Dorsolateral prefrontal cortex (tissue), 120 donors: ENCODE measurements at regions of chr2 and their contacts with region 1.

Region 1: GRCh38 chr2:210252699-210253606 is 27.7 kb upstream of the ACADL start:
- DNase-seq: no peak
- H3K4me3 ChIP-seq: no peak overlapping the region
- H3K27ac ChIP-seq: no peak overlapping the region
- H3K27me3 ChIP-seq: no peaks in the 10 kb centered on the region
- CTCF ChIP-seq: no peak

Region 2: DNA sequence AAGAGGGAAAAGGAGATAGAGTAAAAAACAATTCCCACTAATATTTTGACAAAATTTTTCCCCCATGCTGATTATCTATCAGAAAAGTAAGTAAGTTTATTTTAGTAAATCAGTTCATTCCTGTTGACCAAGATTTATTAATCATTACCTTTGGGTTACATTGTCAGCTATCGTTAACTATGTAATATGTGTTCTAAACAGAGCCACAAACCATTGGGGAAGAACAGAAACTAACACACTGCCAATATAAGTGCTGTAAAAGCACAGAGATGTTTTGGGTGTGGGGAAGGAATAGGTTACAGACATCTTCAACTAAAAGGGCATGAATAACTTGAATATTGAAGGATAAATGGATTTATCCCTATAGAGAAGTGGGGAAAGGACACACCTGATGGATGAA is 14.7 kb after region 1 on chr2:
- intact Hi-C with region 1: no loop called
- DNase-seq: no peak
- H3K4me3 ChIP-seq: no peak overlapping the region
- H3K27ac ChIP-seq: no peak overlapping the region
- H3K27me3 ChIP-seq: peaks cover 0 to 19% (median 0%) of the 10 kb centered on the region in 45 donors
- CTCF ChIP-seq: no peak

Region 3: GRCh38 chr2:210392469-210392951 is 139.6 kb after region 1 on chr2:
- intact Hi-C with region 1: loop called (anchors 5 to 10 kb)
- DNase-seq: no peak
- H3K4me3 ChIP-seq: no peak overlapping the region
- H3K27ac ChIP-seq: no peak overlapping the region
- H3K27me3 ChIP-seq: no peaks in the 10 kb centered on the region
- CTCF ChIP-seq: no peak

Region 4: DNA sequence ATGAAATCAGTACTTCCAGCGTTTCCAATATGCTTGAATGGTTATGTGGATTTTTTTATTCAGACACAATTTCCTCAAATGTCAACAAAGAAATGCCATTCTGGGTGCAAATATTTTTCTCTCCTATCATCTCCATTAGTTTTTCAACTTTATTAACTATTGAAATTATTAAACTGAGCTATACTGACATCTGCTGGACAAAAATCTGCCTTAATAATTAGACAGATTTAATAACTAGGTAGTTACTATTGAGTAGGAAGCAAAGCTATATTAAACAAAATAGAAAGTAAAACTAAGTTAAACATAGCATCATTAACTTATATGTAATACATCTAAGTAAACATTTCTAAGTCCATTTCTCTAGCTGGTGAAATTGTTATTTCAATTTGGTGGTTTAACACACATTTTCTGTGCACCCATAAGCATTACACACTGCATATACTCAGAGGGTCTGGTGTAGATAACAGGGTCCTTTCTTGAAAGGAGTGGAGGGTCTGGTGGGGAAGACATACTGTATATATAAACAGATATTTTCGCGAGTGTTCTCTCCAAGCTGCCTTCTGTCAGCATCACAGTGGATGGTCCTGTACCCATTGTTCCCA is 146.6 kb after region 1 on chr2:
- intact Hi-C with region 1: loop called (anchors 5 to 10 kb)
- DNase-seq: no peak
- H3K4me3 ChIP-seq: no peak overlapping the region
- H3K27ac ChIP-seq: no peak overlapping the region
- H3K27me3 ChIP-seq: no peaks in the 10 kb centered on the region
- CTCF ChIP-seq: peak; percentile 27 to 72 (median 54)

Region 5: DNA sequence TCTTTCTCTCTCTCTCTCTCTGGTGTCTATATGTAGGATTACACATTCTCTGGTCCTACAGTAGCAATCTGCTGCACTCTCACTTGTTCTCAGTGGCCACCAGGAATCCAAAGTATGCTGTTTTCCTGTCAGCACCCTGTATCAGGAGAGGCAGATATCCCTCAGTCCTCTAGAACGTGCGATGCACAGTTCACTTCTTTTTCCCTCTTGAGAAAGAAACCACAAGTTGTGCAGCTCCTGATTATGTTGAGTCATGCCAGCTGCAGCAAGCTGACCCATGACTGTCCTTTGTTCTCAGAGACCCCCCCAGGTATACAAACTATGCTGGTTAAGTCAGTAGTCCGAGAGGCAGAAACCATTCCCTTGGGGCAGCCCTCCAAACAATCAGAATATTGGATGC is 169.0 kb after region 1 on chr2:
- intact Hi-C with region 1: no loop called
- DNase-seq: no peak
- H3K4me3 ChIP-seq: no peak overlapping the region
- H3K27ac ChIP-seq: no peak overlapping the region
- H3K27me3 ChIP-seq: no peaks in the 10 kb centered on the region
- CTCF ChIP-seq: no peak